OCI-LY7 (cell line): ENCODE measurements at regions of chr1 and their contacts with region 1.

Region 1: GRCh38 chr1:26516987-26517765 is 12.4 kb upstream of the RPS6KA1 start:
- DNase-seq: no peak
- H3K4me3 ChIP-seq: no peak overlapping the region
- H3K27ac ChIP-seq: no peak overlapping the region
- H3K4me1 ChIP-seq: no peaks in the 10 kb centered on the region
- CTCF ChIP-seq: no peak

Region 2: DNA sequence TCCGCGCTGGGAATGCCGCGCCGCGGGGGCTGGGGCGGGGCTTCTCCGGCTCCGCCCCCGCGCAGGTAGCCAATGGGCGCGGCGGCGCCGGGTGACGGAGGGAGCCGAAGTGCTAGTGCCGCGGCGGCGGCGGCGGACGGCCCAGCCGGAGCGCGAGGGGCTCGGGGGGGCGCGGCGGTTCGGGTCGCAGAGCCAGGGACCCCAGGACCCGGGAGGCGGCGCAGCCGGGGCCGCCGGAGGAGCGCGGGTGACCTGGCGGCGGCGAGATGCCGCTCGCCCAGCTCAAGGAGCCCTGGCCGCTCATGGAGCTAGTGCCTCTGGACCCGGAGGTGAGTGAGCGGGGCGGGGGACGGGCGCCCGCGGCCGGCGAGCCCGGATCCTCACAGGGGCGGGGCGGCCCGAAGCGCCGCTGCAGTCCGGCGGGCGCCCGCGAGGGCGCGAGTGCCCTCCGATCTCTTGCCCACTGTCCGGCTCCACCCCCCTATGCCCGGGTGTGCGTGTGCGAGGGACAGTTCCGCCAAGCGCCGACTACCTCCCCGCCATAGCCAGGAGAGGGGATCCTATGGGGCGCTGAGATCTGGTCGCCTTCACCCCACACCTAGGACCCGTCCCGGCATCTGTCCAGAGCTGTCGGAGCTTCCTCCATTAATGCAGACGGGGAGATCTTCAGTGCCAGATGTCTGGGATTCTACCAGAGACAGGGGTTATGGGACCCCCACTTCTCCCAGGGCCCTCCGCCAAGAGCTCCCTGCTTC is 12.7 kb after region 1 on chr1 and contains the start of gene RPS6KA1:
- CTCF ChIA-PET with region 1: no interaction called
- POLR2A ChIA-PET with region 1: interaction called, 10 read pairs
- intact Hi-C with region 1: no loop called
- DNase-seq: peak; percentile 81
- H3K4me3 ChIP-seq: peak within 1 kb of the TSS; percentile 93
- H3K27ac ChIP-seq: peak within 1 kb of the TSS; percentile 55
- H3K4me1 ChIP-seq: peaks cover 43% of the 10 kb centered on the region
- CTCF ChIP-seq: no peak
- total RNA-seq, gene RPS6KA1: 54.1 and 72.2 TPM in 2 replicates

Region 3: DNA sequence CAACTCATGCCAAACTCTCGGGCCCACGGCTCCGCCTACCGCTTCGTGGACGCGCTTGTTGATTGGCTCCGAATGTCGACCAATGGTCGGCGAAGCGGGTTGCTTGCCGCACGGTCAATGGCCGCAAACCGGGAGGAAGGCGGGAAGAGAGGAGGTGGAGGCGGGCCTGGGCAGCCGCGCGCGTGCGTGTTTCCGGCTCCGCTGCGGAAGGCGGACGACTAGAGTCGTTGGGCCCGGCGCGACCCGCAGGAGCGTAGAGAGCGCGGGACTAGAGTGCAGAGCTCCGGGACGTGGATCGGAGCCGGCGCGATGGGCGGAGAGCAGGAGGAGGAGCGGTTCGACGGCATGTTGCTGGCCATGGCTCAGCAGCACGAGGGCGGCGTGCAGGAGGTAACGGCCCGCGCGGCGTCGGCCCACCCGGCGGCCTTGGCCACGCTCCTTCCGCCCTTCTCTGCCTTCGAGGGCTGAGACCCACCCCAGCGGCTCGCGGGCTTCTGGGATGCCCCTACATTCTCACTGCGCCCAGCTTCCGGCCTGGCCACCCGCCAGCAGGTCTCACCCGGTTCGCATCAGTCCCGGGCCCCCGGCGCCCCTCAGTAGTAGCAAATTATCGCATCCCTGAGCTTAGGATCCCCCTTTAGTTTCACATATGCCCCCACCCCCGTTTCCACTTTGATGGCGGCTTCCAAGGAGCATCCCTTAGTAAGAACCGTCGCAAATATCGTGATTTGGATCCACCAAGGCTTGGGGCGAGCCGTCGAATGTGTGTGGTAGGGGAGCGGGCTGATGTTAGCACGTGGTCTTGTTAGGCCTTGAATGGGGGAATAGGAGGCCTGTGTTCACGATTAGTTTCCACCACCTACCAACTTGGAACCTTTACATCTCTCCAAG is 404.6 kb after region 1 on chr1 and contains the start of gene NUDC:
- CTCF ChIA-PET with region 1: no interaction called
- POLR2A ChIA-PET with region 1: no interaction called
- intact Hi-C with region 1: no loop called
- DNase-seq: peak; percentile 97
- H3K4me3 ChIP-seq: peak within 1 kb of the TSS; percentile 84
- H3K27ac ChIP-seq: peak within 1 kb of the TSS; percentile 33
- H3K4me1 ChIP-seq: peaks cover 16% of the 10 kb centered on the region
- CTCF ChIP-seq: no peak
- total RNA-seq, gene NUDC: 65.7 and 89.3 TPM in 2 replicates